ENCODE measurements at regions of chr7 and their contacts with region 1.

Region 1: DNA sequence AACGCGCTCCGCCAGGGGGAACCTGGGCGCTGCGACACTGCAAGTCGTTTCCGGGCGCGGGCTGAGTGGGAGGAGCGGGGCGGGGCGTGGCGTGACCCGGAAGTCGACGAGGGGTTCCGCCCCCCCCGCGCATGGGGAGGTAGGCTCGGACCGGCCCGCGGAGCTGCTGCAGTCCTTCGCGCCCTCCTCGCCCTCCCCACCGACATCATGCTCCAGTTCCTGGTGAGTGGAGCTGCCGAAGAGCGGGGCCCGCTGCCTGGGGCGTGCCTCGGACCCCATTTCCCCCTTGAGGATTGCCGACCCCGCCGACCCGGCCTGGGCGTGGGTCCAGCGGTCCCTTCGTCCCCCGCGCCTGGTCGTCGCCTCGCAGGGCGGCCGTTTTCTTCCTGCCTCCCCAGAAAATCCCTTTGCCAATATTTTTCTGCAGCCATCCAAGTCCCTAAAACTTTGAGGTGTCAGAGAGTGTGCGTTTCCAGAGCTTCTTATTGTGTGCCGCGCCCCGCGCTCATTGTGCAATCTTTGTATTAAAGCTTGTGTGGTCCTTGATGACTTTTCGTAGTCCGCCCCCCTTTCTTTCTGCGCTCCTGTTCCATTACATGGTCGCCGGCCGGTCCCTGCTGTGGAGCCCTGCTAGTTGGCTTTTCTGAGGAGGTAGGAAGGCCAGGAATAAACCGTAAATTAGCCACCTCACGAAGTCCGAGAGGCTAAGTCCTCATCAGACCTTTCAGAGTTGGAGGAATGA is at the start of gene STMP1:
- DNase-seq: peak; percentile 93
- H3K4me3 Mint-ChIP-seq: peak within 1 kb of the TSS; percentile 97
- H3K27ac Mint-ChIP-seq: peak within 1 kb of the TSS; percentile 93
- H3K4me1 Mint-ChIP-seq: peaks cover 22% of the 10 kb centered on the region
- H3K27me3 Mint-ChIP-seq: no peaks in the 10 kb centered on the region
- total RNA-seq, gene STMP1: 22.7 and 24.7 TPM in 2 replicates

Region 2: GRCh38 chr7:135023622-135024021 is 638.9 kb before region 1 on chr7:
- intact Hi-C with region 1: no loop called
- DNase-seq: no peak
- H3K4me3 Mint-ChIP-seq: no peak overlapping the region
- H3K27ac Mint-ChIP-seq: no peak overlapping the region
- H3K4me1 Mint-ChIP-seq: no peaks in the 10 kb centered on the region
- H3K27me3 Mint-ChIP-seq: peaks cover 1% of the 10 kb centered on the region

Region 3: DNA sequence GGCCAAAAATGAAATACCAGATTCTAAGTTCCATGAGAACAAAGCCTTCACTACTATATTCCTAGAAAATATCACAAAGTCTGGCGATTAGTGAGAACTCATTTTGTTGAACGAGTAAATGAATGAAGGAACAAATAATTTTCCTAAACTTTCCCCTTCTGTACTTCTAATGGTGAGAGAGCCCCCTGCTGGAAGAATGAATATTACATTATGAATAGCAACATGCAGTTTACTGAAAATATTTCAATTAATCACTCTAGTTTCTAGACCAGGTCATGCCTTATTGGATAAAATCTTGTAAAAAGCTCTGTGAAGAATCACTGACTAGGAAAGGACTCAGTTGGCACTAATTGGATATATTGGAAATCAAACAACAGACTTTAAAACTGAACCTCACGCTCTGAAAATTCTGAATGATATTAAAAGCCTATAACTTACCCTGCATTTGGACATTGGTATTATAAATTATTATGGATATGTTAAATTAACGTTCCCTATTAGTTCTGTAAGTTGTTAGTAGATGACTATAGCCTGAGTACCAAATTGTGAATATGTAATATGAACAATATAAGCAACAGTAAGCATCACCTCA is 347.0 kb after region 1 on chr7:
- intact Hi-C with region 1: loop called (anchors 5 kb)
- DNase-seq: no peak
- H3K4me3 Mint-ChIP-seq: no peak overlapping the region
- H3K27ac Mint-ChIP-seq: no peak overlapping the region
- H3K4me1 Mint-ChIP-seq: peaks cover 4% of the 10 kb centered on the region
- H3K27me3 Mint-ChIP-seq: no peaks in the 10 kb centered on the region

Measured in activated T-helper 1 cell treated with anti-CD3 and anti-CD28 coated beads, Interleukin-12 subunit alpha, Interleukin-12 subunit beta, Interleukin-2, Interleukin-4 antibody, amounts not matched to agents 30 ng/mL and 10 ng/mL and 1 ng/mL, durations not matched to agents 14 hours and 24 hours and 36 hours (primary cell).